CD4-positive, alpha-beta memory T cell (primary cell): ENCODE measurements at regions of chrX and their contacts with region 1.

Region 1: DNA sequence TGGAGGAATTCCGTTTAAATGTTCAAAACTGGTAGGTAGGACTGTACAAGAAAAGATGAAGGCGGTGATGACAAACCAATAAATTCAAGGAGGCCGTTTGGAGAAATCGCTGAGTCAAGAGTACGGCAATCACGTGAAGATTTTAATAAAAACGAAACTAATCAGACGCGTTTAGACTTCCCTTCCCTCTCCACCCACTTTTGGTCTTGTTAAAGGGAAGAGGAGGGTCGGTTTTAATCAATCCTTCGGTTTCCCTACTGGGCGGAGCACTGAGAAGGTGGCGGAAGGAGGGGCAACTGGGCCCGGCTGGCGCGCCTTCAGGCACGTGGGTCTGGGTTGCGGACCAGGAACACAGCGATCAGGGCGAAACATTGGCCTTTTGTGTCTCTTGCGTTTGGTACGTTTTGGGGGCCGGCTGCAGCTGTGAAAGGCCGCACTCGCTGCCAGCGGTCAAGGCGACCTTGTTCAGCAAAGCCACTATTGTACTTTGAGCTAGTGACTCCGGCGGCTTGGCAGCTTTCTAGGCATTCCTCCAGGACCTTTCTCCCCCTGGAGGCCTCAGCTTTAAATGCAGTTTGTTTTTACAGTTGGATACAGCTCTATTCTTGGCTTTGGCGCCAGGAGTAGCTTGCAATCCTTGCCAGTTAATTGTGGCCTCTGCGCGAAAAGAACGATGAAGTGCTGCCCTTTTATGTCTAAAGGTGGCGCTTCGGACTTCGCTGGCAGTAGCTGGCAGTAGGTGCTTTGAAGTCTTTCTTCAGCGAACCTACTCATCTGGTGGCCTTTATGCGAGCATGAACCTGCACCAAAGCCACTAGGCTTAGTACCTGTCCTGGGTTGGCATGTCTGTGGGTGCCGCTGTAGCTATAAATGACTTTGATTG is 16.8 kb upstream of the LAMP2 start:
- DNase-seq: peak; percentile 52 to 76 (median 58)
- H3K4me3 ChIP-seq: peak overlapping the region; percentile 73 to 88
- H3K4me3 Mint-ChIP-seq: peak overlapping the region; percentile 90 to 96 (median 92)
- H3K27ac ChIP-seq: peak overlapping the region; percentile 68
- H3K27ac Mint-ChIP-seq: peak overlapping the region; percentile 95 to 97 (median 96)
- H3K4me1 ChIP-seq: peaks cover 35% of the 10 kb centered on the region
- H3K4me1 Mint-ChIP-seq: peaks cover 12 to 28% (median 22%) of the 10 kb centered on the region in 4 donors
- H3K27me3 ChIP-seq: no peaks in the 10 kb centered on the region
- H3K27me3 Mint-ChIP-seq: no peaks in the 10 kb centered on the region

Region 2: DNA sequence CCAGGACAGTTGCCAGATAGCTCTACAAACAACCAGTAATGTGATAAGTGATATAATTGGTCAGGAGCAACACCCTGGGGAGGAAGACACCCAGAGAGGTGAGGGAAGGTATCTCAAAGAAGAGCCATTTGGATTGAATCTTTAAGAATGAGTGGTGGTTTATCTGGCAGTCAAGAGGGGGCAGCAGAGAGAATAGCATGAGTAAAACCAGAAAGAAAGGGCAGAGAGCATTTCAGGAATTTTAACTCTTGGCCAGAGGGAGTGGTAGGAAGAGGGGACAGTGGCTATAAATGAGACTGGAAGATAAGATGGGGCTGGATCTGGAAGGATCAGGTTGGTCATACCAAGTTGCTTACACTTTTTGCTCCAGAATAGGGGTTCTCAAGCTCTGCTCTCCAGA is 787.0 kb before region 1 on chrX:
- CTCF ChIA-PET with region 1: no interaction called
- POLR2A ChIA-PET with region 1: no interaction called
- intact Hi-C with region 1: no loop called
- DNase-seq: no peak
- H3K4me3 ChIP-seq: no peak overlapping the region
- H3K4me3 Mint-ChIP-seq: no peak overlapping the region
- H3K27ac ChIP-seq: no peak overlapping the region
- H3K27ac Mint-ChIP-seq: peak overlapping the region in 2 of 7 donors; percentile 20 to 43
- H3K4me1 ChIP-seq: peaks cover 2% of the 10 kb centered on the region
- H3K4me1 Mint-ChIP-seq: peaks cover 6 to 11% (median 7%) of the 10 kb centered on the region in 4 donors
- H3K27me3 ChIP-seq: no peaks in the 10 kb centered on the region
- H3K27me3 Mint-ChIP-seq: peaks cover 0 to 2% of the 10 kb centered on the region in 2 donors

Region 3: GRCh38 chrX:120468825-120469525 is 16.9 kb before region 1 on chrX and contains the start of gene LAMP2:
- CTCF ChIA-PET with region 1: interaction called, 12 read pairs
- POLR2A ChIA-PET with region 1: interaction called, 16 read pairs
- intact Hi-C with region 1: loop called (anchors 1 kb)
- DNase-seq: peak; percentile 75 to 83 (median 76)
- H3K4me3 ChIP-seq: peak within 1 kb of the TSS; percentile 61 to 70
- H3K4me3 Mint-ChIP-seq: peak within 1 kb of the TSS; percentile 87 to 95 (median 93)
- H3K27ac ChIP-seq: peak within 1 kb of the TSS; percentile 72
- H3K27ac Mint-ChIP-seq: peak within 1 kb of the TSS; percentile 85 to 95 (median 89)
- H3K4me1 ChIP-seq: peaks cover 37% of the 10 kb centered on the region
- H3K4me1 Mint-ChIP-seq: peaks cover 12 to 34% (median 20%) of the 10 kb centered on the region in 4 donors
- H3K27me3 ChIP-seq: no peaks in the 10 kb centered on the region
- H3K27me3 Mint-ChIP-seq: no peaks in the 10 kb centered on the region
- total RNA-seq, gene LAMP2: 44.2 to 45.8 TPM

Region 4: GRCh38 chrX:120560842-120561633 is 75.2 kb after region 1 on chrX and contains the start of gene CUL4B:
- CTCF ChIA-PET with region 1: interaction called, 3 read pairs
- POLR2A ChIA-PET with region 1: interaction called, 17 read pairs
- intact Hi-C with region 1: loop called (anchors 5 kb)
- DNase-seq: peak; percentile 89 to 97 (median 91)
- H3K4me3 ChIP-seq: peak within 1 kb of the TSS; percentile 59 to 90
- H3K4me3 Mint-ChIP-seq: peak within 1 kb of the TSS; percentile 91 to 99 (median 94)
- H3K27ac ChIP-seq: peak within 1 kb of the TSS; percentile 91
- H3K27ac Mint-ChIP-seq: peak within 1 kb of the TSS; percentile 94 to 98 (median 96)
- H3K4me1 ChIP-seq: peaks cover 31% of the 10 kb centered on the region
- H3K4me1 Mint-ChIP-seq: peaks cover 9 to 44% (median 17%) of the 10 kb centered on the region in 4 donors
- H3K27me3 ChIP-seq: no peaks in the 10 kb centered on the region
- H3K27me3 Mint-ChIP-seq: no peaks in the 10 kb centered on the region
- total RNA-seq, gene CUL4B: 54.0 to 61.0 TPM

Region 5: GRCh38 chrX:120726294-120726693 is 240.4 kb after region 1 on chrX:
- CTCF ChIA-PET with region 1: no interaction called
- POLR2A ChIA-PET with region 1: no interaction called
- intact Hi-C with region 1: no loop called
- DNase-seq: no peak
- H3K4me3 ChIP-seq: no peak overlapping the region
- H3K4me3 Mint-ChIP-seq: no peak overlapping the region
- H3K27ac ChIP-seq: no peak overlapping the region
- H3K27ac Mint-ChIP-seq: peak overlapping the region in 1 of 7 donors; percentile 26
- H3K4me1 ChIP-seq: no peaks in the 10 kb centered on the region
- H3K4me1 Mint-ChIP-seq: no peaks in the 10 kb centered on the region
- H3K27me3 ChIP-seq: no peaks in the 10 kb centered on the region
- H3K27me3 Mint-ChIP-seq: no peaks in the 10 kb centered on the region